ENCODE measurements at regions of chr6 and their contacts with region 1.

Region 1: GRCh38 chr6:5003604-5004372 is at the start of gene RPP40:
- DNase-seq: peak; percentile 99
- H3K4me3 ChIP-seq: peak within 1 kb of the TSS; percentile 86
- H3K27ac ChIP-seq: peak within 1 kb of the TSS; percentile 86
- H3K4me1 ChIP-seq: no peaks in the 10 kb centered on the region
- H3K27me3 ChIP-seq: no peaks in the 10 kb centered on the region
- CTCF ChIP-seq: peak; percentile 94
- total RNA-seq, gene RPP40: 28.0 and 30.7 TPM in 2 replicates

Region 2: DNA sequence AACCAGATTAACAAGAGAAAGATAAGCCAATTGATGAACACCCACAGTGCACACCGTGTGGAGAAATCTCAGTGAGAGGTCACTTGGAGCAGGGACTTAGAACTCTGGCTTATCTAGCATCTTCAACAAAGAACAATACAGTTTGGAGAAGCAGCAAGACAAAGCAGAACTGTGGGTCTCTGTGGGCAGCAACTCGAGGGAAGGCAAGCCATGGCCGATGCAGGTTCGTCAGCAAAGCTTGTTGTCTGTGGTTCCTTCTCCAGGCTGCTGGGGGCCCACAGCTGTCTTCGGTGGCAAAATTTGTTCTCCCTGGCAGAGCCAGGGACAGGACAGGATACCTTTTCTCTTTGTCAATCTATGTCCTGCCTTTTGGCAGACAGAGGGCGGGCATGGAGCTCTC is 22.0 kb before region 1 on chr6:
- CTCF ChIA-PET with region 1: interaction called, 12 read pairs
- POLR2A ChIA-PET with region 1: no interaction called
- intact Hi-C with region 1: no loop called
- DNase-seq: no peak
- H3K4me3 ChIP-seq: no peak overlapping the region
- H3K27ac ChIP-seq: no peak overlapping the region
- H3K4me1 ChIP-seq: peaks cover 12% of the 10 kb centered on the region
- H3K27me3 ChIP-seq: no peaks in the 10 kb centered on the region
- CTCF ChIP-seq: no peak

Region 3: GRCh38 chr6:5103250-5103649 is 99.5 kb after region 1 on chr6:
- CTCF ChIA-PET with region 1: no interaction called
- POLR2A ChIA-PET with region 1: no interaction called
- intact Hi-C with region 1: no loop called
- DNase-seq: no peak
- H3K4me3 ChIP-seq: no peak overlapping the region
- H3K27ac ChIP-seq: no peak overlapping the region
- H3K4me1 ChIP-seq: no peaks in the 10 kb centered on the region
- H3K27me3 ChIP-seq: no peaks in the 10 kb centered on the region
- CTCF ChIP-seq: no peak

Region 4: GRCh38 chr6:5132731-5133341 is 129.0 kb after region 1 on chr6:
- CTCF ChIA-PET with region 1: no interaction called
- POLR2A ChIA-PET with region 1: no interaction called
- intact Hi-C with region 1: no loop called
- DNase-seq: peak; percentile 54
- H3K4me3 ChIP-seq: no peak overlapping the region
- H3K27ac ChIP-seq: no peak overlapping the region
- H3K4me1 ChIP-seq: peaks cover 15% of the 10 kb centered on the region
- H3K27me3 ChIP-seq: no peaks in the 10 kb centered on the region
- CTCF ChIP-seq: no peak; the same call in 1 of the 2 replicates

Region 5: DNA sequence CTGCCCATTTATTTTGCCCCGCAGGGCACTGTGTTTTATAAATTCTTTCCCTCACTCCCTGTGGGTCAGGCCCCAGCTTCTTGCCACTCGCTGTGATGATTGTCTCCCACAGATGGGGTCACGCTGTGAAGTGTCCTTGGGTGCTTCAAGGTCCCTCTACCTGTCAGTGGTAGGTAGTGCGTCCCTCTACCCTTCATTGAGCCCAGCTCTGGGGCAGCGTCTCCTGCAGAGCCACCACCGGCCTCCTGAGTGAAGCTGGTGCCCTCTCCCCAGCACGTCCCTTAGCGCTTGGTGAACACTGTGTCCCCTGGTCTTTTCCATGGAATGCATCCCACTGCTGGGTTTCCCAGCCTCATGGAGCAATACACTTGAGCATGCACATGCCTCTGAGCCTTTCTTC is 894.8 kb after region 1 on chr6:
- CTCF ChIA-PET with region 1: interaction called, 15 read pairs
- POLR2A ChIA-PET with region 1: no interaction called
- intact Hi-C with region 1: no loop called
- DNase-seq: no peak
- H3K4me3 ChIP-seq: no peak overlapping the region
- H3K27ac ChIP-seq: no peak overlapping the region
- H3K4me1 ChIP-seq: no peaks in the 10 kb centered on the region
- H3K27me3 ChIP-seq: no peaks in the 10 kb centered on the region
- CTCF ChIP-seq: no peak

Measured in A673 (cell line).